Ovary (tissue), 10 donors: ENCODE measurements at regions of chr4 and their contacts with region 1.

Region 1: GRCh38 chr4:92566269-92566668 is 262.5 kb downstream of the GRID2 start:
- DNase-seq: no peak
- H3K4me3 ChIP-seq: no peak overlapping the region
- H3K27ac ChIP-seq: no peak overlapping the region
- H3K4me1 ChIP-seq: no peaks in the 10 kb centered on the region
- H3K27me3 ChIP-seq: no peaks in the 10 kb centered on the region
- CTCF ChIP-seq: no peak
- EP300 ChIP-seq: no peak
- POLR2A ChIP-seq: no peak

Region 2: GRCh38 chr4:92012899-92013867 is 553.1 kb before region 1 on chr4:
- intact Hi-C with region 1: no loop called
- DNase-seq: no peak
- H3K4me3 ChIP-seq: no peak overlapping the region
- H3K27ac ChIP-seq: no peak overlapping the region
- H3K4me1 ChIP-seq: no peaks in the 10 kb centered on the region
- H3K27me3 ChIP-seq: no peaks in the 10 kb centered on the region
- CTCF ChIP-seq: no peak
- EP300 ChIP-seq: no peak
- POLR2A ChIP-seq: no peak

Region 3: DNA sequence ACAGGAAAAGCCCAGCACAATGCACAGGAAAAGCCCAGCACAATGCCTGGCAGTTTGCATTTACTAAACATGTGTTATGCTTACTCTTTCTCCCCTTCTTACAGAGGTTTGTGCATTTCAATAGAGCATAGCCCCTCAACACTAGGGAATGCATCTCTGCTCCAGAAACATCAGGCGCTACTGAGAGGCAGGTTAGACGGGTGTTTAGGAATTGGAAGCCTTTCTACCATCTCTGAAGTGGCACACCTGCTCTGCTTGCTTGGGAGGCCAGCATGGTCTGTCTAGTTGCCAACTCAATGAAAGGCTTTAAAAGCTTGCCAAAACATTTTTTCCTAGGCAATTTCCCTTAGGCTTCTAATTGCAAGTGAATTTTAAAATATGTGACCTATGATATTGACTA is 206.8 kb before region 1 on chr4:
- intact Hi-C with region 1: no loop called
- DNase-seq: no peak
- H3K4me3 ChIP-seq: no peak overlapping the region
- H3K27ac ChIP-seq: no peak overlapping the region
- H3K4me1 ChIP-seq: no peaks in the 10 kb centered on the region
- H3K27me3 ChIP-seq: no peaks in the 10 kb centered on the region
- CTCF ChIP-seq: no peak
- EP300 ChIP-seq: no peak
- POLR2A ChIP-seq: no peak

Region 4: DNA sequence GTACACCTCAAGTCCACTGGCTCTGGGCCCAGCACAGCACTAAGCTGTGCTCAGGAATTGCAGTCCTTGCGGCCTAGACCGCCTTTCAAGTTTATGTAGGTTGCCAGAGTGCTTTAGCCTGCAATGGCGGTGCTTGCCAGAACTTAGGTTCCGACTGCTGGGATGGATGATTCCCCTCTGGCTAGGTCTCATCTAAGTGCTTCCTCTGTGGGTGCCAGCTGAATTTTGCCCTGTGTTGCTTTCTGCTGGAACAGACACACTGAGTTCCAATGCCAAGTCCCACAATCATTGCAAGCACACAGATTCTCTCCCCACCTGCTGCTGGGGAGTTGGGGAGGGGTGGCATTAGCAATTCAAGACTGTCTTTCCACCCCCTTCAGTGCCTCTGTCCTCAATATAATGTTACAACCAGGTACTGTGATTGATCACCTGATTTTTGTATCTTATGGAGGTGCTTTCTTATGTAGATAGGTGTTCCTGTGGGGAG is 133.0 kb before region 1 on chr4:
- intact Hi-C with region 1: no loop called
- DNase-seq: no peak
- H3K4me3 ChIP-seq: no peak overlapping the region
- H3K27ac ChIP-seq: no peak overlapping the region
- H3K4me1 ChIP-seq: no peaks in the 10 kb centered on the region
- H3K27me3 ChIP-seq: no peaks in the 10 kb centered on the region
- CTCF ChIP-seq: no peak
- EP300 ChIP-seq: no peak
- POLR2A ChIP-seq: no peak

Region 5: DNA sequence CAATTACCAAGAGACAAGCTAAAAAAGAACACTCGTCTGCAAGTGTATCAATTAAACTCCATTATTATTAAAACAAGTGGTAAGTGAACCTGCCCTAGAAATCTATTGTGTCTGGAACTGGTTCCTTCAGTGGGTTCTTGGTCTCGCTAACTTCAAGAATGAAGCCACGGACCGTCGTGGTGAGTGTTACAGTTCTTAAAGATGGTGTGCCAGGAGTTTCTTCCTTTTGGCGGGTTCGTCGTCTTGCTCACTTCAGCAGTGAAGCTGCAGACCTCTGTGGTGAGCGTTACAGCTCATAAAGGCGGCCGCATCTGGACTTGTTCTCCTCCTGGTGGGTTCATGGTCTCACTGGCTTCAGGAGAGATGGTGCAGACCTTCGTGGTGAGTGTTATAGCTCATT is 30.7 kb before region 1 on chr4:
- intact Hi-C with region 1: loop called in 1 of 4 experiments (anchors 1 kb)
- DNase-seq: no peak
- H3K4me3 ChIP-seq: no peak overlapping the region
- H3K27ac ChIP-seq: no peak overlapping the region
- H3K4me1 ChIP-seq: no peaks in the 10 kb centered on the region
- H3K27me3 ChIP-seq: no peaks in the 10 kb centered on the region
- CTCF ChIP-seq: no peak
- EP300 ChIP-seq: no peak
- POLR2A ChIP-seq: no peak